Activated naive CD4-positive, alpha-beta T cell treated with anti-CD3 and anti-CD28 coated beads for 36 hours (primary cell): ENCODE measurements at regions of chr1 and their contacts with region 1.

Region 1: DNA sequence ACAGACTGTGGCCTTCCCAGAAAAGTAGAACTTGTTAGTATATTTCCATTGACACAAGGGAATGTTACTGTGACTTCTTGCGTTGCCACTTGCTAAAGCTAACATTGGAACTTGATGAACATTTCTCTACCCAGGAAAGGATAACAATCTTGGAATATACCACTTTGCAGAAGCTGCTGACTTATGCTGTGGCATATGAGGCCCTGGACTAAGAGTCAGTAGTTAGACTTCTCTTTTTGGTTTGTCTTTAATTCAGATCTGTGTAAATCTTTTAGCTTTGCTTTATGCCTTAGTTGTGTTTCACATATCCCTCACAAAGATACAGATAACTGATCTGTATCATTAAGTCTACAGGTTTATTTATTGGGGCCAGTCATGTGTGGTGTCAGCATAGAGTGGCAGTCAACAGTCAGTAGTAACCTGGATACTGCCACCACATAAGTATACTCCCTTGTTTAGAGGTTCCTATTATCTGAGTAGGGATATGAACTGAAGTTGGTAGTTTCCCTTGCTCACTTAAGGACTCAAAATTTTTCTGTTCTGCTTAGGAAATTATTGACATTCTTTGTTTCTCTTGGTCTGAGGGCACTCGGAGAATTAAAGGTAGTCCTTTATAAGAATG is 14.7 kb downstream of the RNF2 start:
- DNase-seq: no peak
- H3K4me3 Mint-ChIP-seq: no peak overlapping the region
- H3K27ac Mint-ChIP-seq: no peak overlapping the region
- H3K4me1 Mint-ChIP-seq: peaks cover 55% of the 10 kb centered on the region
- H3K27me3 Mint-ChIP-seq: no peaks in the 10 kb centered on the region

Region 2: GRCh38 chr1:185559684-185560331 is 499.7 kb after region 1 on chr1:
- CTCF ChIA-PET with region 1: no interaction called
- intact Hi-C with region 1: loop called (anchors 1 kb)
- DNase-seq: peak; percentile 58
- H3K4me3 Mint-ChIP-seq: no peak overlapping the region
- H3K27ac Mint-ChIP-seq: no peak overlapping the region
- H3K4me1 Mint-ChIP-seq: peaks cover 43% of the 10 kb centered on the region
- H3K27me3 Mint-ChIP-seq: no peaks in the 10 kb centered on the region